Esophagus squamous epithelium (tissue), 5 donors: ENCODE measurements at regions of chr7 and their contacts with region 1.

Region 1: GRCh38 chr7:107462740-107463444 is 7.0 kb upstream of the GPR22 start:
- DNase-seq: no peak
- H3K4me3 ChIP-seq: no peak overlapping the region
- H3K27ac ChIP-seq: no peak overlapping the region
- H3K4me1 ChIP-seq: no peaks in the 10 kb centered on the region
- H3K27me3 ChIP-seq: no peaks in the 10 kb centered on the region
- CTCF ChIP-seq: peak; percentile 49 to 80 (median 63)
- POLR2A ChIP-seq: no peak

Region 2: DNA sequence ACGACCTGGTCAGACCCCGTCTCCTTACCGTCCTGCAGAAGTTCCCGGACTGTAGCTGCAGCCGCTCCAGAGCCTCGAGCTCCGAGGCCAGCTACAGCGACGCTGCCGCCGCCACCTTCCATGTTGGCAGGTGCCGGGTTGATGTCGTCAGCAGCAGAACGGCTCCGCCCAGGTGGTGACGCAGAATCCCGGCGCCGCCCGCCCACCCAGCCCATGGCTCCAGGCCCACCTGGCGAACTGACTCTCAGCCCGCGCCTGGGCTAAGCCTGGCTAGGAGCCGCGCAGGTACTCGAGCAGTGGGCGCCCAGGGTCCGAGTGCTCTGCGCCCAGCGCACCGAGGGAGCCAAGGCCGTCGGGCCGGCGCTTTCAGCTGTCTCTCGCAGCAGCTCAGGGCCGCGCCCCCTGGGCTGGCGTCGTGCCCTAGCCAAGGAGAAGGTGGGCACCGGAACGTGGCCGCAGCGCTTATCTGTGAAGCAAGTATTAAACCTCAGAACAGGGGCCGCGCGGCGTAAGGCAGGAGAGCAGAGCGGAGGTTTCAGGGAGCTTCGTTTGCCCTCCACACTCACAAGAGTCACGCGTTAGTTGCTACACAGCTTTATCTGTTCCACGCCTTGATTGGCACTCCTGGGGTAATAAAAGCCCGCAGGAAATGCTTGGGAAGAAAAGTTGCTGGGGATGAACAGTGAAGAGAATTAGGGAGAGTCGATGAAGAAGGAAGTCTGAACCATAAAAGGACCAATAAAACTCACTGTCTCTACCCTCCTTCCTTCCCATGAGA is 101.1 kb after region 1 on chr7 and contains the starts of genes COG5 and DUS4L:
- intact Hi-C with region 1: no loop called
- DNase-seq: peak; percentile 6
- H3K4me3 ChIP-seq: peak within 1 kb of the TSS; percentile 80 to 98 (median 88)
- H3K27ac ChIP-seq: peak within 1 kb of the TSS; percentile 94 to 98 (median 96)
- H3K4me1 ChIP-seq: peaks cover 5 to 58% (median 29%) of the 10 kb centered on the region in 3 donors
- H3K27me3 ChIP-seq: no peaks in the 10 kb centered on the region
- CTCF ChIP-seq: no peak
- POLR2A ChIP-seq: peak in 3 of 4 donors; percentile 33 to 78 (median 46)
- total RNA-seq, gene COG5: 24.4 to 30.0 (median 27.2) TPM
- total RNA-seq, gene DUS4L: 2.7 to 8.0 (median 7.2) TPM

Region 3: GRCh38 chr7:107725151-107725740 is 262.4 kb after region 1 on chr7:
- intact Hi-C with region 1: loop called (anchors 5 kb)
- DNase-seq: no peak
- H3K4me3 ChIP-seq: no peak overlapping the region
- H3K27ac ChIP-seq: no peak overlapping the region
- H3K4me1 ChIP-seq: no peaks in the 10 kb centered on the region
- H3K27me3 ChIP-seq: peaks cover 0 to 20% (median 0%) of the 10 kb centered on the region in 4 donors
- CTCF ChIP-seq: peak; percentile 45 to 76 (median 60)
- POLR2A ChIP-seq: no peak

Region 4: DNA sequence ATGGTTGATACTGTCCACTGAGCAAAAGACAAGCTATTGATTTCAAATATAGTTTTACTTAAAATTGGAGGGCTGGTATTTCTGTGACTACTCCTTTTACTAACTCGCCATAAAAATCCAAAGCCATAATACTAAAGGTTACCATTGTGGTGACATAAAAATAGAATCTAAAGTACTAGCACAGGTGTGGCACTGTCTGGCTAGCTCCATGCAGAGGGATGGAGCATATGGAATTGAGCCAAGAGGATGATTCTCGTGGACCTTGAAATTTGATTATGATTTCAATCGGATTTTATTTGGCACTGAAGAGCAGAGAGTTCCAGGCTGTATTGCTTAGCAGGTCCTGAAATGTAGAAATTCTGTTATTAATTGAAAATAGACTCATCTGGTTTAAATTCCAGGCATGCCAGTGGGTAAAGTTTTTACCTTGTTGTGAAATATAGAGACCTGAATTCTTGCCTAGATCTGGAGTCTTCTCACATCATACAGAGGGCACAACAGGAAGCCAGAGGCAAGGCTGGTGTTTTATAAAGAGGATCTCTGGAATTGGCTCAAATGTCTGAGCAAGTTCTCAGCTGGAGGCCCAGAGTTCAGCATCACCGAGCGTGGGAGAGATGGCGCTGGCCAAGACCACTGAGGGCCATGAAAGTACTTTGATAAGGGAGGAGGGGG is 398.2 kb after region 1 on chr7:
- intact Hi-C with region 1: loop called (anchors 10 kb)
- DNase-seq: no peak
- H3K4me3 ChIP-seq: no peak overlapping the region
- H3K27ac ChIP-seq: no peak overlapping the region
- H3K4me1 ChIP-seq: peaks cover 0 to 20% (median 6%) of the 10 kb centered on the region in 3 donors
- H3K27me3 ChIP-seq: peaks cover 0 to 12% (median 0%) of the 10 kb centered on the region in 4 donors
- CTCF ChIP-seq: no peak
- POLR2A ChIP-seq: no peak